ENCODE measurements at regions of chr17 and their contacts with region 1.

Region 1: DNA sequence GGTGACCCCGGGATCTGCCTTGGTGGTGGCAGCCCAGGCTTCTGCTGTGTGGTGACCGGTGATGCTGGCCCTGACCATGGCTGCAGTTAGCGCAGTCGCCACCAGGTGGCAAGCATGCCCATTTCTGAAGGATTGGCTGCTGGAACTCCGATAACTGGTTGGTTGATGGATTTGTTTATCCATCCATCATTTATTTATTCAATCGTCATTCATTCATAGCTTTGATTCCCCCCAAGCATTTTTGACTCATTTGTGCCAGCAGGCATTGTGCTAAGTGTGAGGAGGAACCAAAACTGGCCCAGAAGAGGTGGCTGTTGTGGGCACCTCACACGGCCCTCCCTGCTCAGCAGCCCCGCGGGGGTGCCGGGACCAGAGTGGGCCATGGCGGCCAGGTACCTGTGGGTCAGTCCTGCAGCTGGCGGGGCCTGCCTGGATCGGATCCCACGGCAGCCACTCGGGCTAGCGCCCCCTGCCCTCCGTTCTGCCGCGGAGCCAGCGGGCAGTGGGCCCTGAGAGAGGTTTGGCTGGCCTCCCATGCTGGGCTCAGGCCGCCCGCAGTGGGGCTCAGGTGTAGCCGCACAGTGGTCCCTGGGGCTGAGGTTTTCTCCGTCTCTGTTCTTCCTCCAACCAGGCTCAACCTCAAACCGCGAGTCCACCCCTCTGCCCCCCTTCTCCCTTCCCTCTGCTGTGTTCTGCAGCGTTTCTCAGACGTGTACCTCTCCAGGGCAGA is 28.8 kb upstream of the ITGA3 start:
- DNase-seq: peak; percentile 56 to 89 (median 76)
- ATAC-seq: peak; percentile 81
- H3K4me3 ChIP-seq: no peak overlapping the region
- H3K4me3 Mint-ChIP-seq: no peak overlapping the region
- H3K27ac ChIP-seq: no peak overlapping the region
- H3K27ac Mint-ChIP-seq: no peak overlapping the region
- H3K4me1 ChIP-seq: peaks cover 12% of the 10 kb centered on the region
- H3K4me1 Mint-ChIP-seq: peaks cover 11% of the 10 kb centered on the region
- H3K27me3 ChIP-seq: peaks cover 16 to 20% of the 10 kb centered on the region in 2 experiments
- H3K27me3 Mint-ChIP-seq: peaks cover 42% of the 10 kb centered on the region
- CTCF ChIP-seq: peak; percentile 98

Region 2: GRCh38 chr17:50055426-50056230 is 28.6 kb after region 1 on chr17 and contains the start of gene ITGA3:
- CTCF ChIA-PET with region 1: no interaction called
- POLR2A ChIA-PET with region 1: no interaction called
- intact Hi-C with region 1: loop called (anchors 2 kb)
- DNase-seq: peak; percentile 14 to 81 (median 58)
- ATAC-seq: peak; percentile 58
- H3K4me3 ChIP-seq: peak within 1 kb of the TSS; percentile 78
- H3K4me3 Mint-ChIP-seq: peak within 1 kb of the TSS; percentile 93
- H3K27ac ChIP-seq: peak within 1 kb of the TSS; percentile 21 to 23
- H3K27ac Mint-ChIP-seq: peak within 1 kb of the TSS; percentile 62
- H3K4me1 ChIP-seq: peaks cover 27% of the 10 kb centered on the region
- H3K4me1 Mint-ChIP-seq: peaks cover 30% of the 10 kb centered on the region
- H3K27me3 ChIP-seq: no peaks in the 10 kb centered on the region
- H3K27me3 Mint-ChIP-seq: no peaks in the 10 kb centered on the region
- CTCF ChIP-seq: no peak
- total RNA-seq, gene ITGA3: 2.3 to 2.4 TPM

Region 3: DNA sequence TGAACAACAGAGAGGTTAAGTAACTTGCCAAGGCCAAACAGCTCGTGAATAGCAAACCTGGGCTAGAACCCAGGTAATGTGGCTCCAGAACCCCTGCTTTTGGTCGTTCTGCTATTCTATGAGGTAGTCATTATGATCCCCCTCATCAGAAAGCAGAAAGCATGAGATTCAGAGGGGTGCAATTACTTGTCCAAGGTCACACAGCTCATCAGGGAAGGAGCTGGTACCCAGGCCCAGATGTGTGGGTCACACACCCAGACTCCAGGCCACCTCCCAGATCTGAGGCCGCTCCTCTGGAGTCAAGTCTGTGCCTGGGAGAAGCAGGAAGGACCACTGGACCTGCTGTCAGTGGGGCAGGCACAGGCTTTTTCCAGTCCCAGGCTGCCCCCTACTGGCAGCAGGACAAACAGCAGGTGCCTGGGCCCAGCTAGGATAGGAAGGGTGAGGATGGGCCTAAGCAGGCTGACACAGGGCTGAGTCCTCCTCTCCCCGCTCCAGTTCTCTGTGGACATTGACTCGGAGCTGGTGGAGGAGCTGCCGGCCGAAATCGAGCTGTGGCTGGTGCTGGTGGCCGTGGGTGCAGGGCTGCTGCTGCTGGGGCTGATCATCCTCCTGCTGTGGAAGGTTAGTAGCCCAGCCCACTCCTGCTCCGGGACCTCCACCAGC is 60.3 kb after region 1 on chr17:
- CTCF ChIA-PET with region 1: interaction called, 41 read pairs
- POLR2A ChIA-PET with region 1: interaction called, 4 read pairs
- intact Hi-C with region 1: loop called (anchors 1 kb)
- DNase-seq: peak; percentile 50 to 84 (median 71)
- ATAC-seq: peak; percentile 89
- H3K4me3 ChIP-seq: no peak overlapping the region
- H3K4me3 Mint-ChIP-seq: no peak overlapping the region
- H3K27ac ChIP-seq: no peak overlapping the region
- H3K27ac Mint-ChIP-seq: no peak overlapping the region
- H3K4me1 ChIP-seq: peaks cover 3% of the 10 kb centered on the region
- H3K4me1 Mint-ChIP-seq: no peaks in the 10 kb centered on the region
- H3K27me3 ChIP-seq: no peaks in the 10 kb centered on the region
- H3K27me3 Mint-ChIP-seq: no peaks in the 10 kb centered on the region
- CTCF ChIP-seq: peak; percentile 99

Region 4: GRCh38 chr17:50297407-50297865 is 270.4 kb after region 1 on chr17:
- CTCF ChIA-PET with region 1: no interaction called
- POLR2A ChIA-PET with region 1: no interaction called
- intact Hi-C with region 1: loop called (anchors 5 to 10 kb)
- DNase-seq: peak; percentile 67 to 85 (median 72)
- ATAC-seq: peak; percentile 100
- H3K4me3 ChIP-seq: no peak overlapping the region
- H3K4me3 Mint-ChIP-seq: no peak overlapping the region
- H3K27ac ChIP-seq: no peak overlapping the region
- H3K27ac Mint-ChIP-seq: no peak overlapping the region
- H3K4me1 ChIP-seq: no peaks in the 10 kb centered on the region
- H3K4me1 Mint-ChIP-seq: no peaks in the 10 kb centered on the region
- H3K27me3 ChIP-seq: peaks cover 0 to 3% of the 10 kb centered on the region in 2 experiments
- H3K27me3 Mint-ChIP-seq: peaks cover 16% of the 10 kb centered on the region
- CTCF ChIP-seq: peak; percentile 84

Measured in CD4-positive, alpha-beta T cell (primary cell).